Aorta (tissue), 5 donors: ENCODE measurements at regions of chr5 and their contacts with region 1.

Region 1: GRCh38 chr5:83473346-83474163 is 2.0 kb downstream of the VCAN start:
- DNase-seq: peak; percentile 96 to 97
- ATAC-seq: peak; percentile 91
- H3K4me3 ChIP-seq: peak overlapping the region; percentile 67 to 87
- H3K27ac ChIP-seq: peak overlapping the region; percentile 23 to 55
- H3K4me1 ChIP-seq: no peaks in the 10 kb centered on the region
- H3K27me3 ChIP-seq: no peaks in the 10 kb centered on the region

Region 2: GRCh38 chr5:82312373-82312856 is 1161.1 kb before region 1 on chr5:
- intact Hi-C with region 1: loop called in 1 of 2 experiments (anchors 5 kb)
- DNase-seq: peak; percentile 75 to 87
- ATAC-seq: peak; percentile 88
- H3K4me3 ChIP-seq: peak overlapping the region; percentile 5 to 32
- H3K27ac ChIP-seq: peak overlapping the region; percentile 33 to 77
- H3K4me1 ChIP-seq: peaks cover under 1 to 4% of the 10 kb centered on the region in 2 donors
- H3K27me3 ChIP-seq: no peaks in the 10 kb centered on the region

Region 3: GRCh38 chr5:82356808-82357671 is 1116.5 kb before region 1 on chr5:
- intact Hi-C with region 1: loop called (anchors 5 kb)
- DNase-seq: peak; percentile 90
- ATAC-seq: peak; percentile 82
- H3K4me3 ChIP-seq: no peak overlapping the region
- H3K27ac ChIP-seq: peak overlapping the region in 1 of 2 donors; percentile 49
- H3K4me1 ChIP-seq: peaks cover 0 to 3% of the 10 kb centered on the region in 2 donors
- H3K27me3 ChIP-seq: no peaks in the 10 kb centered on the region

Region 4: DNA sequence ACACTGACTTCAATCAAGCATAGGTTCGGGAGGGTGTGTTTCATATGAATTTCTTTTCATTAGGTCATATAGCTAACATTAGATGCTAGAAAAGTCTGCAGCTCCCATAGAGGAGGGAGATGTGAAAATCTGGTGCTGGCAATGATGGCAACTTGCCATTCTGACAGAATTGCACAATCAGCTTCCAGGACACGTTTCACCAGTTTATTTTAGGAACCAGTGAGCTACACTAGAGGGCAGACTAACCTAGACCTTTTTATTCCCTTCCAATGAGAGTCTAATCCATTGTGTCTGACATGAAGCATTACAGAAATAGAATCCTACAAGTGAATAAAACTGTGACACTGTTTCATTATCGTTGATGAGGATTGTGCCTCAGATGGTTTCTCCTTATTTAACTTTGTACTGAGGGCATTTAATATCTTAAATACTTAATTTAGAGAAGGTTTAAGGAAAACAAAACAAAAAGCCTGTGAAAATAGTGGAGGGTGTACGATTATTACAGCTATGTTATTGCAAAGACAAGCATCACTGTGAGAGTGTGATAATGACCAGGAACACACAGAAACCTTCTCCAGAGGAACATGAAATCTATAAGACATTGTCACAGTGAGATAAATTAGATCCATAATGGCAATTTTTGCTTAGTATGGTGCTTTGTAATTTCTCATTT is 832.1 kb before region 1 on chr5:
- intact Hi-C with region 1: loop called (anchors 5 kb)
- DNase-seq: peak; percentile 72 to 79
- ATAC-seq: peak; percentile 92
- H3K4me3 ChIP-seq: no peak overlapping the region
- H3K27ac ChIP-seq: peak overlapping the region in 1 of 2 donors; percentile 51
- H3K4me1 ChIP-seq: peaks cover 0 to 10% of the 10 kb centered on the region in 2 donors
- H3K27me3 ChIP-seq: no peaks in the 10 kb centered on the region

Region 5: DNA sequence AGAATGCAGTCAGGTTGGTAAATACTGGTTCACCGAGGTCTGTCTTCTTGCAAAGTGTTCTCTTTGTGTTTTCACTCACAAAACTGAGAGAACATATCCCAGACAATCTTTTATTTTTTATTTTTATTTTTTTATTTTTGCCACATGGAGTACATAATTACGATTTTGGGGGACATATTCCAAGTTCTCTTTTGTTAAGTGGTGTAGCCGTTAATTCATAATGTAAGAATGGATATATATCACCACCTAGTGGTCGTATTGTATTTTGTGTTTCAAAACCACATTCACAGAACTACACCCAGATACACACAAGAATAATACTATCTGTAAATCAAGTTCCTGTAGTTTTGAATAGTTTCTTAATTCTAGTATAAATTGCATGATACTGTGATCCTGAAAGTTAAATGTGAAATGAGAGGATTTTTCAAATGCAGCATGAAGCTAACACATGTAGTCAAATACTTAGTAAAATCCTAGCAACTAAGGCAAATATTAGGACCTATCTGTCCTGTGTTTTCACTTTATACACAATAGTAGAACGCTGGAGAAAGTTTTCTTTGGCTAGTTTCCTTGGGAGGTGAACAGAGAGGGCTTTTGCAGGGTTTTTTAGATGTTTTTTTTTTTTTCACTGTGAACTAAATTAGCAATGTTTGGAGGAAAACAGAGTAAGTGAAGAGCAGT is 90.7 kb after region 1 on chr5:
- intact Hi-C with region 1: loop called (anchors 5 to 10 kb)
- DNase-seq: no peak
- ATAC-seq: peak; percentile 76
- H3K4me3 ChIP-seq: no peak overlapping the region
- H3K27ac ChIP-seq: no peak overlapping the region
- H3K4me1 ChIP-seq: peaks cover 4 to 6% of the 10 kb centered on the region in 2 donors
- H3K27me3 ChIP-seq: no peaks in the 10 kb centered on the region